CD8-positive, alpha-beta memory T cell (primary cell): ENCODE measurements at regions of chr12 and their contacts with region 1.

Region 1: GRCh38 chr12:95473884-95474659 is at the start of gene METAP2:
- DNase-seq: peak; percentile 80 to 90 (median 84)
- H3K4me3 ChIP-seq: peak within 1 kb of the TSS; percentile 67
- H3K4me3 Mint-ChIP-seq: peak within 1 kb of the TSS; percentile 95 to 100 (median 99)
- H3K27ac ChIP-seq: peak within 1 kb of the TSS; percentile 96
- H3K27ac Mint-ChIP-seq: peak within 1 kb of the TSS; percentile 82 to 100 (median 98)
- H3K4me1 ChIP-seq: peaks cover 40% of the 10 kb centered on the region
- H3K4me1 Mint-ChIP-seq: peaks cover 51 to 62% (median 55%) of the 10 kb centered on the region in 3 donors
- H3K27me3 ChIP-seq: no peaks in the 10 kb centered on the region
- H3K27me3 Mint-ChIP-seq: peaks cover 3 to 4% of the 10 kb centered on the region in 2 donors
- total RNA-seq, gene METAP2: 109 to 129 TPM

Region 2: DNA sequence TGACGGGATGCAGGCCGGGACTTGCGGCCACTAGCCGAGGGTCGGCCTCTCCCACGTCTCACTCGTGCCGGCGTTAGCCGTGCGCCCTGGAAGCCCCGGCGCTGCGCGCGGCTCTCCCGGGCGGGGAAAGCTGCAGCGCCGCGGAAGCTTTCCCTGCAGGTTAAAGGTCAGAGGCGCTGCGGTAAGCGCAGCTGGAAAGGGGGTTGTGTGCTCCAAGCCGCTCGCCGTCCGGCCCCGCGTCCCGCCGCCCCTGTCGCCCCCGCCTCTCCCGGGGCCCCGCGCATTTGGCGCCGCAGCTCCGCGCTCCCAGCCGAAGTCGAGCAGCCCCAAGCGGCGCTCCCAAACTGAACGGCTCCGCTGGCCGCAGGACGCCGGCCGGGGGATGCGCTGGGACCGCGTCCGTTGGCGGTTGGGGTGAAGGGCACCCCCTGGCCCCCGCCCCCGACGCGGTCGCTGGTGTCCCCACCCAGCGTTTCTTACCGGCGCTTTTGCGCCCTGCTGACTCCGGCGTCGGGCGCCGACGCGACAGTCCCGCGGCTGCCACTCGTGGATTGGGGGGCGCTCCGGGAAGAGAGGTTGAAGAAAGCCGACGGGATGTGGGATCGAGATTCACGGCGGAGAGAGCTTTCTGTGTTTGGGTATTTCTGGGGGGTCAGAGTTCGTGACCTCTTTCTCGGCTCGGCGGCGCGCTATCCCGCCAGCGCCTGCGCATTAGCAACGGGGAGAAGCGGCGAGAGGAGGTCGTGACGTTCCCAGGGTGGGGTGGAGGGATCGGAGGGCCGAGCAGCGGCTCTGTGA is 401.0 kb before region 1 on chr12 and contains the start of gene NR2C1:
- CTCF ChIA-PET with region 1: interaction called, 10 read pairs
- POLR2A ChIA-PET with region 1: no interaction called
- DNase-seq: peak; percentile 85 to 95 (median 92)
- H3K4me3 ChIP-seq: peak within 1 kb of the TSS; percentile 88
- H3K4me3 Mint-ChIP-seq: peak within 1 kb of the TSS; percentile 95 to 98 (median 96)
- H3K27ac ChIP-seq: peak within 1 kb of the TSS; percentile 81
- H3K27ac Mint-ChIP-seq: peak within 1 kb of the TSS; percentile 80 to 99 (median 94)
- H3K4me1 ChIP-seq: peaks cover 12% of the 10 kb centered on the region
- H3K4me1 Mint-ChIP-seq: peaks cover 23 to 37% (median 25%) of the 10 kb centered on the region in 3 donors
- H3K27me3 ChIP-seq: no peaks in the 10 kb centered on the region
- H3K27me3 Mint-ChIP-seq: no peaks in the 10 kb centered on the region
- total RNA-seq, gene NR2C1: 17.1 to 21.9 TPM

Region 3: GRCh38 chr12:95217377-95218149 is 256.5 kb before region 1 on chr12 and contains the starts of genes FGD6 and VEZT:
- CTCF ChIA-PET with region 1: interaction called, 5 read pairs
- POLR2A ChIA-PET with region 1: interaction called, 22 read pairs
- DNase-seq: peak; percentile 94 to 98 (median 98)
- H3K4me3 ChIP-seq: peak within 1 kb of the TSS; percentile 84
- H3K4me3 Mint-ChIP-seq: peak within 1 kb of the TSS; percentile 91 to 98 (median 96)
- H3K27ac ChIP-seq: peak within 1 kb of the TSS; percentile 94
- H3K27ac Mint-ChIP-seq: peak within 1 kb of the TSS; percentile 86 to 99 (median 96)
- H3K4me1 ChIP-seq: peaks cover 17% of the 10 kb centered on the region
- H3K4me1 Mint-ChIP-seq: peaks cover 33 to 45% (median 42%) of the 10 kb centered on the region in 3 donors
- H3K27me3 ChIP-seq: no peaks in the 10 kb centered on the region
- H3K27me3 Mint-ChIP-seq: peaks cover 4 to 9% of the 10 kb centered on the region in 2 donors
- total RNA-seq, gene FGD6: 0.75 to 0.92 TPM
- total RNA-seq, gene VEZT: 46.8 to 53.6 TPM

Region 4: GRCh38 chr12:95582230-95583058 is 108.4 kb after region 1 on chr12:
- CTCF ChIA-PET with region 1: no interaction called
- POLR2A ChIA-PET with region 1: no interaction called
- DNase-seq: no peak
- H3K4me3 ChIP-seq: no peak overlapping the region
- H3K4me3 Mint-ChIP-seq: no peak overlapping the region
- H3K27ac ChIP-seq: no peak overlapping the region
- H3K27ac Mint-ChIP-seq: no peak overlapping the region
- H3K4me1 ChIP-seq: no peaks in the 10 kb centered on the region
- H3K4me1 Mint-ChIP-seq: no peaks in the 10 kb centered on the region
- H3K27me3 ChIP-seq: no peaks in the 10 kb centered on the region
- H3K27me3 Mint-ChIP-seq: peaks cover 9 to 15% of the 10 kb centered on the region in 2 donors